ENCODE measurements at regions of chr18 and their contacts with region 1.

Region 1: DNA sequence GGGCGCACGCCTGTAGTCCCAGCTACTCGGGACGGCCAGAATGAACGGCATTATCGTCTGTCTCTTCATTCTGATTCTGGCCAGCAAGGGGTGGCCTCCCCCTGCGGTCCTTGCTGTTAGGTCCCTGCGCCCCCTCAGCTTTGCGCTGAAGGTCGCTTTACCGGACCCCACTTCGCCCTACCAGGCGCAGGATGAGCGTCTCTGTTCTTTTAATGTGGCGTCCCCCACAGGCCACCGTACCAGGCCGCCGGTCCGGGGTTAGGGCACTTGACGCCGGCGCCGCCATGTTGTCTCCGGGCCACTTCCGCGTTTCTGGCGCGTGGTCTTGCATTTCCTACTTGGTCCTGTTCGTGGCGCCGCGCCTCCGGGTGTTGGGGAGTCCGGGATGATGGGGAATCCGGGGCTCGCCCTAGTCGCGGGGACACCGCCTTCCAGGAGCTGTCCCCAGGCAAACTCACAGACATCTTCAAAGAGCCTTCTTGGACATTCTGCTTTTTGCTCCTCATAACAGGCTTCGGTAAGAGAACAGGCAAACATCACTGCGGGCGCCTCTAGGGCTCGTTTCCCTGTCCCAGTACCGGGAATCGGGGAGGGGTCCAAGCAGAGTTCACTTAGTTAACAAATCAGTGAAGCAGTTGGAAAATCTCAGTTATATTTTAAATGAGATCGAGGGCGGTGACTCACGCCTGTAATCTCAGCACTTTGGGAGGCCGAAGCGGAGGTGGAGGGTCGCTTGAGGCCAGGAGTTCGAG is 8.5 kb upstream of the NARS1 start:
- DNase-seq: peak; percentile 90
- ATAC-seq: peak; percentile 91
- H3K4me3 Mint-ChIP-seq: peak overlapping the region; percentile 98
- H3K27ac Mint-ChIP-seq: peak overlapping the region; percentile 99
- H3K4me1 Mint-ChIP-seq: peaks cover 26% of the 10 kb centered on the region
- H3K27me3 Mint-ChIP-seq: no peaks in the 10 kb centered on the region
- CTCF ChIP-seq: no peak

Region 2: DNA sequence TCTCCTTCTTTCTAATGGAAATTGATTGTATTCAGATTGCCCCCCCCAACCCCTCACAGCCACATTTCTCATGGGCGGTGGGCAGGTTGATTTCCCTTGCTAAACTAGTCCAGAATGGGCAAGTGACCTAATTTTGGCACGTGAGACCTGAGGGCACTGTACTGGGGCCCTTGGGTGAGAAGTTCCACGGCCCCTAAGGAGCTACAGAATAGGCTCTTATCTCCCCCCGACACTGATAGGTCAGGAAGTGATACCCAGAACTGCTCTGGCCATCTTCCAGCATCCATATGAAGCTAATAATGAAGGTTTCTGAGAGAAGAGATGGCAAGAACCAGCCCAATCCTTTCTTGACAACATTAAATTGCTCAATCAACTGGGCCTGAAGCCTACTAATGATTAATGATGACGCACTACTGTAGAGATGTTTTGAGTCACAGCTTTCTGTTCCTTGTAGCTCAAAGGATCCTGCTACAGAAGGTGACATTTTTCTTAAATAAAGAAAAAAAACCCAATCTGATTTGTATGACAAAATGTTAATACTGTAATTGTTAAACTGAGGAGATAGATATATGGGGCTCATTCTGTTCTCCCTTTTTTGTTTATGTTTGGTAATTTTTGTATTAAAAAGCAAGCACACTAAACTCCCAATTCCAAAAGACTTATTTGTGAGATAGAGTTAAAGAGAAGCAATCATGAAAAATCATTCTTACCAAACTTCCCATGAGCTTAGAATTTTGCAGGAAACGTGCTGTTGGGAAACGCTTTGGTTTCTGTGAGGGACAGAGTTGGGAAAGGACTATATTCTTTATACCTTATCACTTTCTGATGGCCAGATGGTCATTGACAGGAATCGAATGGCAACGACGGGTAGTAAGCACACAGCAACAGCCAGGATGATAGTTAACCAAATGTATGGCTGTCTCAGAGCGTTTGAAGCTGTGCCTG is 19.6 kb after region 1 on chr18:
- CTCF ChIA-PET with region 1: interaction called, 8 read pairs
- POLR2A ChIA-PET with region 1: interaction called, 10 read pairs
- intact Hi-C with region 1: loop called (anchors 1 kb)
- DNase-seq: peak; percentile 25
- ATAC-seq: peak; percentile 88
- H3K4me3 Mint-ChIP-seq: peak overlapping the region; percentile 1
- H3K27ac Mint-ChIP-seq: peak overlapping the region; percentile 86
- H3K4me1 Mint-ChIP-seq: peaks cover 48% of the 10 kb centered on the region
- H3K27me3 Mint-ChIP-seq: no peaks in the 10 kb centered on the region
- CTCF ChIP-seq: no peak

Region 3: DNA sequence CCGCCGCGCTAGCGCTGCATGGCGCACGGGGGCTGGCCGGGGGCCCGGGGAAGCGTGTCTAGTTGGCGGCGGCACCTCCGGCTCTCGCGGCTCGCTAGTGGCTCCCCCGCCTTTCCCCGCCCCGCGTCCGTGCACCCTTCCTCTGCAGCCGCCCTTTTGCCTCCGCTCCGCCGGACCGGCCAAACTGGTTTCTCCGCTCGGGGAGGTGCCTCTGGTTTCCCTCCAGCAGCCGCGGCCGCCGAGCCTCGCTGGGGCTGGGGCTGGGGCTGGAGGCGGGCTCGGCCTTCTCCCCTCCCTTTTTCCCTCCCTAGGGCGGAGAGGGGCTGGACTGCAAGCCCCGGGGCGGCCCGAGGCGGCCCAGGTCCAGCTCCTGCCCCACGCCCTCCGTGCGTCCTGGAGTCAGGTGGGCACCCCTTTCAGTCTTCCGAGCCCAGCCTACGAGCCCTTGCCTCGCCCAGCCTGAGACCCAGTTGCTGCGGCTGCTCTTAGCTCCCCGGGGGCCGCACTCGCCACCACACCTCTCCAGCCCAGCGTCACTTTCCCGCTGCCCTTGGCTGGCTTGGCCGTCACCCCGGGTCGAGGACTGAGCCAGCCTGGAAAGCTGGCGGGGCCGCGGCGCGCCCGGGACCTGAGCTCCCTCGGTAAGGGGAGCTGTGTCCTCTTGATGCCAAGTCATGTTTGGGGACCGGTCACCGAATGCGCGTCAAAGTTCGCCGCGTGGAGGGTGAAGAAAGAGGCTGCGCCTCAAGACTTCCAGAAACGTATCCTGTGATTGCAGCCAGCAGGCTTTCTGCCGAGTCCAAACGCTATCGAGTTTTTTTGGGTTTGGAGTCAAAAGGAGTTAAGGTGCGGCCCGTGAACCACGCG is 173.2 kb after region 1 on chr18 and contains the start of gene ATP8B1:
- CTCF ChIA-PET with region 1: no interaction called
- POLR2A ChIA-PET with region 1: no interaction called
- intact Hi-C with region 1: loop called (anchors 2 kb)
- DNase-seq: peak; percentile 29
- ATAC-seq: peak; percentile 78
- H3K4me3 Mint-ChIP-seq: peak within 1 kb of the TSS; percentile 85
- H3K27ac Mint-ChIP-seq: no peak within 1 kb of the TSS
- H3K4me1 Mint-ChIP-seq: peaks cover 24% of the 10 kb centered on the region
- H3K27me3 Mint-ChIP-seq: peaks cover 31% of the 10 kb centered on the region
- CTCF ChIP-seq: no peak
- total RNA-seq, gene ATP8B1: 0.42 and 0.69 TPM in 2 replicates

Region 4: DNA sequence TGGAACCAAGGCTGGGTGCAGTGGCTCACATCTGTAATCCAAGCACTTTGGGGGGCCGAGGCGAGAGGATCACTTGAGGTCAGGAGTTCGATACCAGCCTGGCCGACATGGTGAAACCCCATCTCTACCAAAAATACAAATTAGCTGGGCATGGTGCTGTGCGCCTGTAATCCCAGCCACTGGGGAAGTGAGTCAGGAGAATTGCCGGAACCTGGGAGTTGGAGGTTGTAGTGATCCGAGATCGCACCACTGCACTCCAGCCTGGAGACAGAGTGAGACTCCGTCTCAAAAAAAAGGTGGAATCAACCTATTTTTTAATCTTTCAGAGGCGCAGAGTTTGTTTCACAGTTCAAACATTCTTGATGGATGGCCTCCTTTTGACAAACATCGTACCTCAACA is 197.5 kb after region 1 on chr18:
- CTCF ChIA-PET with region 1: no interaction called
- POLR2A ChIA-PET with region 1: no interaction called
- intact Hi-C with region 1: no loop called
- DNase-seq: no peak
- ATAC-seq: no peak
- H3K4me3 Mint-ChIP-seq: no peak overlapping the region
- H3K27ac Mint-ChIP-seq: no peak overlapping the region
- H3K4me1 Mint-ChIP-seq: peaks cover 14% of the 10 kb centered on the region
- H3K27me3 Mint-ChIP-seq: no peaks in the 10 kb centered on the region
- CTCF ChIP-seq: no peak

Region 5: GRCh38 chr18:57881818-57882413 is 251.7 kb after region 1 on chr18:
- CTCF ChIA-PET with region 1: interaction called, 6 read pairs
- POLR2A ChIA-PET with region 1: interaction called, 3 read pairs
- intact Hi-C with region 1: loop called (anchors 1 kb)
- DNase-seq: peak; percentile 37
- ATAC-seq: peak; percentile 99
- H3K4me3 Mint-ChIP-seq: no peak overlapping the region
- H3K27ac Mint-ChIP-seq: no peak overlapping the region
- H3K4me1 Mint-ChIP-seq: peaks cover 8% of the 10 kb centered on the region
- H3K27me3 Mint-ChIP-seq: no peaks in the 10 kb centered on the region
- CTCF ChIP-seq: peak; percentile 79

Region 6: GRCh38 chr18:58117786-58118403 is 487.7 kb after region 1 on chr18:
- CTCF ChIA-PET with region 1: interaction called, 8 read pairs
- POLR2A ChIA-PET with region 1: interaction called, 7 read pairs
- intact Hi-C with region 1: loop called (anchors 1 kb)
- DNase-seq: no peak
- ATAC-seq: no peak
- H3K4me3 Mint-ChIP-seq: no peak overlapping the region
- H3K27ac Mint-ChIP-seq: no peak overlapping the region
- H3K4me1 Mint-ChIP-seq: peaks cover 10% of the 10 kb centered on the region
- H3K27me3 Mint-ChIP-seq: no peaks in the 10 kb centered on the region
- CTCF ChIP-seq: no peak

Measured in activated B cell treated with CpG ODN at 0.5 μM for 24 hours (primary cell).